Activated naive CD4-positive, alpha-beta T cell treated with anti-CD3 and anti-CD28 coated beads for 36 hours (primary cell): ENCODE measurements at regions of chr7 and their contacts with region 1.

Region 1: DNA sequence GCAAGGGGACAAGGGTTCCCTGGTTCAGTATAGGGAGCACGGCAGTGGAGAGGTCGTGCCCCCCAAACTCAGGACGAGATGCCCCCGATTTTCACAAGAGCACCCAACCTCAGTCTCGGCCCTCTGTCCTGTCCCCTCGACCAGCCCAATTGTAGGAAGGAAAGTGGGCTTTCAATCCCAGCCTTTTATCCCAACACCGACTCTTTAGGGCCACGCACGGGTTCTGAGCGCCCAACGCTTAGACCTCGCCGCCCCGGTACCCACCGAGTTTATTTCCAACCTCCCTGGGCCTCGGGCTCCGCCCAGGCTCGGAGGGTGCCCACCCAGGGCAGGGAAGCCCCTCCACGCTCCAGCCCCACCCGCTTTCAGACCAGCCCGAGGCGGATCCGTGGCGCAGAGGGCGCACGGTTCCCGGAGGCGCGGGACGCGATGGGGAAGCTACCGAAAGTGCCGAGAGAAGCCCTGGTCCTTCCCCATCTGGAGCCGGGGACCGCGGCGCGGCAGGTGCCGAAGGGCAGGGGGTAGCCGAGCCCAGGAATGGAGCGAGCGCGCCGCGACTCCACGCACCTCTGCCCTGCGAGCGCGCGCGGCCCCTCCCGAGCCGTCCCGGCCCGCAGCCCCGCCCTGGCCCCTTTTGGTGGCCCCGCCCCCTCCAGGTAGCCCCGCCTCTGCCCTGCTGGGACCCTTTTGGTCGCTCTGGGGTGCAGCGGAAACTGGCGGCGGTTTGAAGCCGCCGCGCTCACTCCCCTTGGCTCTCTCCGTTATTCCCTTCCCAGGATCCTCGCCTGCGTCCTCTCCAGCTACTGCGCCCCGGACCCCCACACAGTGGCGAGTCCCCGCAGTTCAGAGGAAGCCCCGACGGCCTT is 20.4 kb downstream of the GRID2IP start:
- DNase-seq: peak; percentile 55
- H3K4me3 Mint-ChIP-seq: peak overlapping the region; percentile 67
- H3K27ac Mint-ChIP-seq: no peak overlapping the region
- H3K4me1 Mint-ChIP-seq: peaks cover 19% of the 10 kb centered on the region
- H3K27me3 Mint-ChIP-seq: peaks cover 29% of the 10 kb centered on the region

Region 2: DNA sequence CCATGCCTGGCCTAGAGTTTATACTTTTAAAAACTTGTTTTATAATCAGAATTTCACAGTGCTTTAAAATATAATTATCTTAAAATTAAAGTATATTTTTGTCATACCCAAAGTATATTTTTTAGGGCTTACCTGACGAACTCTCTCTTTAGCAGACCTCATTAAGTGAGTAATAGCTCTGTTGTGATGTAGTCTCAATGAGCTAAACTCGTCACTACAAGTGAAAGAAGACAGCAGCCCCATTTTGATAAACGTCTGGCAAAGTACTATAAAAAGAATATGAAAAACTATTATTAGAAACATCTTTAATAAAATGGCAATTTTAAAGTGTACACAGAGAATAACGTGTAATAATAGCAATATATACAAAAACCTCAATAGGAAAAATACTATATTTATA is 481.1 kb before region 1 on chr7:
- CTCF ChIA-PET with region 1: no interaction called
- intact Hi-C with region 1: no loop called
- DNase-seq: no peak
- H3K4me3 Mint-ChIP-seq: no peak overlapping the region
- H3K27ac Mint-ChIP-seq: no peak overlapping the region
- H3K4me1 Mint-ChIP-seq: peaks cover 2% of the 10 kb centered on the region
- H3K27me3 Mint-ChIP-seq: no peaks in the 10 kb centered on the region

Region 3: DNA sequence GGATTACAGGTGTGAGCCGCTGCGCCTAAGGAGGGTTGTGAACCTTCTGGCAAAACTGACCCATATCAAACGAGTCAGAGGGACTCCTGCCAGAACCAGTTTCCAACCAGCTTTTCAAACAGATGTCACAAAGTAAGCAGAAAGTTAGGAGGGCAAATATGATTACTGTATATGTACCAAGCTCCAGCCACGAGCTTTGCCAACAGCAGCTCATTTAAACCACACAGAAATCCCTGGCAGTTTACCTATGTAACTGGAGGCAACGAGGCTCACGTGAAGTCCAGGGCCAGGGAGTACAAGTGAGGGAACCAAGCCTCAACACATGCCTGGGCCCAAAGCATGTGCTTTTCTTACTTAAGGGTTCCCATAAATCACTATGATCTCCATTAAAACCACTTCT is 70.6 kb before region 1 on chr7:
- CTCF ChIA-PET with region 1: no interaction called
- intact Hi-C with region 1: no loop called
- DNase-seq: no peak
- H3K4me3 Mint-ChIP-seq: no peak overlapping the region
- H3K27ac Mint-ChIP-seq: no peak overlapping the region
- H3K4me1 Mint-ChIP-seq: peaks cover 8% of the 10 kb centered on the region
- H3K27me3 Mint-ChIP-seq: no peaks in the 10 kb centered on the region

Region 4: GRCh38 chr7:6545398-6546126 is 14.7 kb after region 1 on chr7:
- CTCF ChIA-PET with region 1: interaction called, 3 read pairs
- intact Hi-C with region 1: loop called (anchors 2 kb)
- DNase-seq: no peak
- H3K4me3 Mint-ChIP-seq: no peak overlapping the region
- H3K27ac Mint-ChIP-seq: no peak overlapping the region
- H3K4me1 Mint-ChIP-seq: peaks cover 12% of the 10 kb centered on the region
- H3K27me3 Mint-ChIP-seq: peaks cover 2% of the 10 kb centered on the region

Region 5: DNA sequence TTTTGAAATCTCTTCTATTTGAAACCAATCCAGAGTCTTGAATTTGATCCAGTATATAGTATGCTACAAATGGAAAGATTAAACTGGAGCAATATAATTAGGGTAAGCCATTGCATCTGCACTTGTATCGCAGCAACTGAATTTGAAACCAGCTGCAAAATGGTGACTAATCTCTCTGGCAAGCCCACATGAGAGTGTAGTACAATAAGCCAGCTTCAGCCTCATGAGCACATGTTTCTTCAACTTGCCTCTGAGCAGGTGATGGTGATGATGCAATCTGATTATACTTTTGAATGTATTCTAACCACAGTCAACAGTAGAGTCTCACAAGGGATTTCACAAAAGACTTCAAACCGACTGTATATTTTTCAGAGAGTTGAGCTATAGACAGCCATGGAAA is 1188.4 kb after region 1 on chr7:
- CTCF ChIA-PET with region 1: no interaction called
- intact Hi-C with region 1: no loop called
- DNase-seq: peak; percentile 77
- H3K4me3 Mint-ChIP-seq: no peak overlapping the region
- H3K27ac Mint-ChIP-seq: peak overlapping the region; percentile 63
- H3K4me1 Mint-ChIP-seq: peaks cover 19% of the 10 kb centered on the region
- H3K27me3 Mint-ChIP-seq: no peaks in the 10 kb centered on the region